OCI-LY7 (cell line): ENCODE measurements at regions of chr12 and their contacts with region 1.

Region 1: DNA sequence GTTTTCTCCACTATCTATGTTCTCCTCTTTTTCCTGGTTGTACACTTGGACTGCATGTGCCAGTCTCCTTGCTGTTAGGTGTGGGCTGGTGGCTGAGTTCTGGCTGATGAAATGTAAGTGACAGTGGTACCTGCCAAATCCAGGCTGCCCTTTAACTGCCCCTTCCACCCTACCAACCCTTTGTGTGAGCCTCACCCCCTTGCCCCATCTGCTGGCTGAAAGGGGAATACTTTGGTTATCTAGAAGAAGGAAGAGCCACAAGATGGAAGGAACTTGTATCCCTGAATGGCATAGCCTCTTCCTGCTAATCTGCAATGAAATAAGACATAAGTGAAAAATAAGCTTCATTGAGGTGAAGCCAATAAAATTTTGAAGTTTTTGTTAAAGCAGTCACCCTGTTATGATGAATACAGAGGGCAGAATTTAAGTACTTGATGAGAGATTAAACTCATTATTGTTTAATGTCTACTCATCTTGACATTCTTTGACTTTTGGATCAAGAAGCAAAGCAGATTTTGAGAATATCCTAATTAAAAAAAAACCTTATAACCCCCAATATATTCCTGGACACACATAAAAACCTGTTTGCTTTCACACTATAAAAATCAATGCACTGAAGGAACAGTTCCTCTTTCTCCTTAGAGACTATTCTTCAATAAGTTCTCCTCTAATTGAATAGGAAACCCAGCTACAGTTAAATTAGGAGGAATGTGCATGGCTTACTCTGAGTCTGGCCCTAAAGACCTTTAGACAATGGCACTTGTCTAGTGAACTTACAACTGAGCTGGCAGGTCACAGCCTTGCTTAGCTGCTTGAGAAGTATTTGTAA is 262.6 kb upstream of the BTG1 start:
- DNase-seq: peak; percentile 81
- H3K4me3 ChIP-seq: no peak overlapping the region
- H3K27ac ChIP-seq: peak overlapping the region; percentile 12
- H3K4me1 ChIP-seq: peaks cover 52% of the 10 kb centered on the region
- CTCF ChIP-seq: peak; percentile 93

Region 2: GRCh38 chr12:91744597-91744996 is 663.7 kb before region 1 on chr12:
- CTCF ChIA-PET with region 1: no interaction called
- POLR2A ChIA-PET with region 1: no interaction called
- intact Hi-C with region 1: no loop called
- DNase-seq: no peak
- H3K4me3 ChIP-seq: no peak overlapping the region
- H3K27ac ChIP-seq: no peak overlapping the region
- H3K4me1 ChIP-seq: no peaks in the 10 kb centered on the region
- CTCF ChIP-seq: no peak

Region 3: DNA sequence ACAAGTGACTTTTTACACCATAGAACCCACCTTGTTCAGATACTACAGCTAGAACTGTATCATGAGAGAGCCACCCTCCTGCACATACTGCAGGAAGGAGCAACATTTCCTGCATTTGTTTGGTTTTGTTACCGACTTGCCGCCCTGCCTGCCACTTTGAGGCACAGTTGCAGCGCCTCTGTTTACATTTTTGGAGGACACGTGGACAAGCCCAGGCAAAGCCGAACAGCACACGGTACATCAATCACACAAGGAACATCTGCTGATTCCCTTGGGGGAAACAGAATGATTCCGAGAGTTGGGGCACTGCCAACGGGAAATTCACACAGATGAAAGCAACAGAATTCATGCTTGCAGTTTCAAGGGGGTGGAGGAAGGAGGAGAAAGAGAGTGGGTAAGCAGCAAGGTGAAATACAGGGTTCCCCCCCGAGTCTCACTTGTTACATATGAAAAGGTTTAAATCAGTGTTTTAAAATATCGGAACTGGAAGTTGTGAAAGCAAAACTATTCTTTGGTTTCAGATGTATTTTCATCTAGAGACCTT is 373.4 kb before region 1 on chr12:
- CTCF ChIA-PET with region 1: no interaction called
- POLR2A ChIA-PET with region 1: no interaction called
- intact Hi-C with region 1: loop called (anchors 5 kb)
- DNase-seq: peak; percentile 88
- H3K4me3 ChIP-seq: peak overlapping the region; percentile 64
- H3K27ac ChIP-seq: peak overlapping the region; percentile 64
- H3K4me1 ChIP-seq: peaks cover 70% of the 10 kb centered on the region
- CTCF ChIP-seq: no peak

Region 4: DNA sequence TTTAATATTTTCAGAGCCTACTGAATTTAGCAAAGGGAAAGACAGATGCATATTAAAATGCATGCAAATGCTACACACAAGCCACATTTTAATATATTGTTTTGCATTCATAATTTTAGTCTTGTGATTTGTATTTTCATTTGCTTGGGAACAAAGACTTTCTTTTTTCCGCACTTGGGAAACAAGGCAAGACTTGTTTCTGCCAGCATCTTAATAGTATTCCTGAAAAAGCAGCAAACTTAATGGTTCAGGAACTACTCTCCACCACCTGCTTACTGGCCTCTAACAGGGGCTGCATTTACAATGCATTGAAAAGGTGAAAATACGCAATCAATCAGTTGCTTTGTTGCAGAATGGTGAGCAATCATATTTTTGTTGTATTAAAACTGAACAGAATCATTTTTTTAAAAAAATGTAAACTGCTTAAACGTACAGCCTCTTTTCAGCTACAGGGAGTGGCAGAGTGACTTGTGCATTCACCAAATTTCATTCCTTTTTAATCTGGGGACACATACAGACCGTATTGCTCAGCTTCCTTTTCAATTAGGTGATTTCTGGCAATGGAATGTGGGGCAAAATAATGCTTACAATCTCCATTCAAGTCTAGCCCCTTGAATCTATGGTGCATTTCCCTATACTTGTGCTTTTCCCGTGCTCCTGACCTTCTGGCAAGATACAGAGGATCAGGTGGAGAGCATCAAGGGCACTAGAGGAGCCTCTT is 118.5 kb before region 1 on chr12:
- CTCF ChIA-PET with region 1: no interaction called
- POLR2A ChIA-PET with region 1: no interaction called
- intact Hi-C with region 1: no loop called
- DNase-seq: no peak
- H3K4me3 ChIP-seq: no peak overlapping the region
- H3K27ac ChIP-seq: no peak overlapping the region
- H3K4me1 ChIP-seq: no peaks in the 10 kb centered on the region
- CTCF ChIP-seq: no peak

Region 5: GRCh38 chr12:92424338-92424737 is 16.1 kb after region 1 on chr12:
- CTCF ChIA-PET with region 1: interaction called, 4 read pairs
- POLR2A ChIA-PET with region 1: interaction called, 14 read pairs
- intact Hi-C with region 1: no loop called
- DNase-seq: no peak
- H3K4me3 ChIP-seq: no peak overlapping the region
- H3K27ac ChIP-seq: no peak overlapping the region
- H3K4me1 ChIP-seq: peaks cover 13% of the 10 kb centered on the region
- CTCF ChIP-seq: no peak

Region 6: GRCh38 chr12:92445253-92446082 is 37.2 kb after region 1 on chr12:
- CTCF ChIA-PET with region 1: interaction called, 12 read pairs
- POLR2A ChIA-PET with region 1: interaction called, 43 read pairs
- intact Hi-C with region 1: loop called (anchors 1 kb)
- DNase-seq: peak; percentile 98
- H3K4me3 ChIP-seq: peak overlapping the region; percentile 58
- H3K27ac ChIP-seq: peak overlapping the region; percentile 99
- H3K4me1 ChIP-seq: peaks cover 65% of the 10 kb centered on the region
- CTCF ChIP-seq: no peak

Region 7: DNA sequence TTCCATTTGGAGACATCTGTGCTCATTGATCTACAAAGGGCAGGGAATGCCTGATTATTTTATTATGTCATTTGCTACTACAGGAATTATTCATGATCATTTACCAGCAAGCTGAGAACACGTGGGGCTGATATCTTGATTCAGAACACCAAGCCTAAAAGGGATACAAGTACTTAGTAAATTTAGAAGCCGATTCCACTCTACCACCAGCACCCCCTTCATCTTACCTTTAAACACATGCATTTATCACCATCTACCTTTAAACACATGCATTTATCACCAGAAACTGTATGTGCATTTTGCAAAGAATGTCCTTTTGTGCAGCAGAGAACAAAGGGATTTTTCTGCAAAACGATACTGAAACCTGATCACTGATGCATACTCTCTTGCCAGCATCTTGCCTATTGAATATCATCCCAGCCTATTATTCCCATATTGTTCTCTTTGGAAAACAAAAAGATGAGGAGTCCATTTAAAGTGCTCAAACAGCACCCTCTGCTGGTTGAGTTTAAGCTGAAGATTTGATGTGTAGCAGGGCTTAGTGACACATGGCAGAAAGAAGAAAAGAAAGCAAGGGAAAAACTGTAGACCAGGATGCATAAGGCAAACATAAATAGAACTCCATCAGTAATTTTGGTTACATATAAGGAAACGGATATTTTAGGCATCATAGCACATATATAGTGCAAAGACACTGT is 161.9 kb after region 1 on chr12:
- CTCF ChIA-PET with region 1: interaction called, 6 read pairs
- POLR2A ChIA-PET with region 1: interaction called, 3 read pairs
- intact Hi-C with region 1: loop called (anchors 1 kb)
- DNase-seq: peak; percentile 85
- H3K4me3 ChIP-seq: peak overlapping the region; percentile 22
- H3K27ac ChIP-seq: peak overlapping the region; percentile 26
- H3K4me1 ChIP-seq: peaks cover 40% of the 10 kb centered on the region
- CTCF ChIP-seq: peak; percentile 100

Region 8: GRCh38 chr12:92899388-92900001 is 491.2 kb after region 1 on chr12:
- CTCF ChIA-PET with region 1: no interaction called
- POLR2A ChIA-PET with region 1: no interaction called
- intact Hi-C with region 1: no loop called
- DNase-seq: no peak
- H3K4me3 ChIP-seq: no peak overlapping the region
- H3K27ac ChIP-seq: no peak overlapping the region
- H3K4me1 ChIP-seq: no peaks in the 10 kb centered on the region
- CTCF ChIP-seq: no peak

Region 9: GRCh38 chr12:94326727-94327126 is 1918.4 kb after region 1 on chr12:
- CTCF ChIA-PET with region 1: no interaction called
- POLR2A ChIA-PET with region 1: no interaction called
- intact Hi-C with region 1: no loop called
- DNase-seq: no peak
- H3K4me3 ChIP-seq: no peak overlapping the region
- H3K27ac ChIP-seq: no peak overlapping the region
- H3K4me1 ChIP-seq: no peaks in the 10 kb centered on the region
- CTCF ChIP-seq: no peak